ENCODE measurements at regions of chr12 and their contacts with region 1.

Region 1: DNA sequence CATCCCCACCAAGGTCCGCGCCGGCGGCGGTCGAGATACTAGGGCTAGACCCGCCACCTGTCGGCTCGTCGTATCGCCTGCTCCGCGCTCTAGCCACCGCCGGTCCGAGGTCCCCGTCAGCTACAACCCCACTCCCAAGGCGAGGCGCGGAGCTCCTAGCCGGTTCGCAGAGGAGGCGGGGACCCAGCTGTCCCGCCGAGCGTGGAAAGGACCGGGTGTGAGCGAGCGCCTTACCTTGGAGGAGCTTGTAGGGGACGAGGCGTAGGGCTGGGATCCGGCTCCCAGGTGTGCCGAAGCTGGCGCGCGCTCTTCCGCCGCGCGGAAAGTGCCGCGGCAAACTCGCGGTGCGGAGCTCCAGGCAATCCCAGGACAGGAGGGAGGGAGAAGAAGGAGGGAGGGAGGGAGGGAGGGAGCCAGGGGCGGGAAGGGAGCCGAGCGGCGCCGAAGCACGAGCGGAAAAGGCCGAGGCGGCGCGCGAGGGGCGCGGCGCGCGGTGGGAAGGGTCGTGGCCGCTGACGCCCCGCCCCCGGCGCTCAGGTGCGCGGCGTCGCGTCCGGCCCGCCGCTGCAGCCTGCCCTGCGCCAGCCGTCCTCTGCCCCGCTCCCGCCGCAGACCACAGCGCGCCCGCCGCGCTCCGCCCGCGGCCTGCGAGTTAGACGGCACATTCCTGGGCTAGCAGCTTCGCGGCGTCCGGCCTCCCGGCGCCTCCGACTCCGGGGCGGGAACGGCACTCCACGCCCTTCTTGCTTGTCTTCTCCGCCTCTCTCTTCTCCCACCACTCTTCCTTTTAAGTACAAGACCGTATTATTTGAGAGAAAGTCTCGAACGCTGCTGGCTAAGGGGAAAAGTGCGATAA is at the start of gene PAWR:
- DNase-seq: peak; percentile 89 to 92
- H3K4me3 ChIP-seq: peak within 1 kb of the TSS; percentile 98
- H3K4me3 Mint-ChIP-seq: peak within 1 kb of the TSS; percentile 89
- H3K27ac Mint-ChIP-seq: peak within 1 kb of the TSS; percentile 90
- H3K4me1 ChIP-seq: peaks cover 19% of the 10 kb centered on the region
- H3K4me1 Mint-ChIP-seq: peaks cover 23% of the 10 kb centered on the region
- H3K27me3 ChIP-seq: no peaks in the 10 kb centered on the region
- H3K27me3 Mint-ChIP-seq: no peaks in the 10 kb centered on the region
- CTCF ChIP-seq: no peak
- total RNA-seq, gene PAWR: 157 and 163 TPM in 2 replicates

Region 2: GRCh38 chr12:79514730-79515529 is 175.9 kb before region 1 on chr12:
- CTCF ChIA-PET with region 1: no interaction called
- POLR2A ChIA-PET with region 1: no interaction called
- intact Hi-C with region 1: no loop called
- DNase-seq: no peak
- H3K4me3 ChIP-seq: no peak overlapping the region
- H3K4me3 Mint-ChIP-seq: no peak overlapping the region
- H3K27ac Mint-ChIP-seq: peak overlapping the region; percentile 3
- H3K4me1 ChIP-seq: no peaks in the 10 kb centered on the region
- H3K4me1 Mint-ChIP-seq: no peaks in the 10 kb centered on the region
- H3K27me3 ChIP-seq: no peaks in the 10 kb centered on the region
- H3K27me3 Mint-ChIP-seq: no peaks in the 10 kb centered on the region
- CTCF ChIP-seq: no peak

Region 3: GRCh38 chr12:79555028-79555930 is 135.6 kb before region 1 on chr12:
- CTCF ChIA-PET with region 1: interaction called, 5 read pairs
- POLR2A ChIA-PET with region 1: no interaction called
- intact Hi-C with region 1: loop called (anchors 2 kb)
- DNase-seq: peak in 1 of 2 experiments; percentile 49
- H3K4me3 ChIP-seq: no peak overlapping the region
- H3K4me3 Mint-ChIP-seq: peak overlapping the region; percentile 12
- H3K27ac Mint-ChIP-seq: peak overlapping the region; percentile 76
- H3K4me1 ChIP-seq: peaks cover 73% of the 10 kb centered on the region
- H3K4me1 Mint-ChIP-seq: peaks cover 34% of the 10 kb centered on the region
- H3K27me3 ChIP-seq: no peaks in the 10 kb centered on the region
- H3K27me3 Mint-ChIP-seq: no peaks in the 10 kb centered on the region
- CTCF ChIP-seq: peak; percentile 56 to 71

Region 4: DNA sequence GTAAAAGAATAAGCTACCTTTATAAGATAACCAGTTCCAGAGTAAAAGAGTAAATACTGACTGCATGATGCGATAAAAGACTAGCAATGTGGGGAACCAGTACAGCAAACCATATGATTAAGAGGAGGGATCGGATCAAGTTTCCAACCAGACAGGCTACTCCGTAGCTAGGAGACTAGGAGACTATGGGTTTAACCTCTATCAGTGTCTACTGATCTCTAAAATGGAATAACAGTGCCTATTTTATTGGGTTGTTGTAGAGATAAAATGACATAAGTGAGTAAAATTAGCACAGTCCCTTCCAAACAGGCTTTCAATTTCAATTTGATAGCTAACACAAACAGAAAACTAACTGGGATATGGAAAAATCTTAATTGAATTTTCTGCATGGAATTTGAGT is 76.1 kb before region 1 on chr12:
- CTCF ChIA-PET with region 1: no interaction called
- POLR2A ChIA-PET with region 1: no interaction called
- intact Hi-C with region 1: loop called (anchors 5 kb)
- DNase-seq: no peak
- H3K4me3 ChIP-seq: no peak overlapping the region
- H3K4me3 Mint-ChIP-seq: no peak overlapping the region
- H3K27ac Mint-ChIP-seq: no peak overlapping the region
- H3K4me1 ChIP-seq: peaks cover 5% of the 10 kb centered on the region; the same call in 1 of the 2 replicates
- H3K4me1 Mint-ChIP-seq: peaks cover 7% of the 10 kb centered on the region
- H3K27me3 ChIP-seq: no peaks in the 10 kb centered on the region
- H3K27me3 Mint-ChIP-seq: no peaks in the 10 kb centered on the region
- CTCF ChIP-seq: no peak

Region 5: DNA sequence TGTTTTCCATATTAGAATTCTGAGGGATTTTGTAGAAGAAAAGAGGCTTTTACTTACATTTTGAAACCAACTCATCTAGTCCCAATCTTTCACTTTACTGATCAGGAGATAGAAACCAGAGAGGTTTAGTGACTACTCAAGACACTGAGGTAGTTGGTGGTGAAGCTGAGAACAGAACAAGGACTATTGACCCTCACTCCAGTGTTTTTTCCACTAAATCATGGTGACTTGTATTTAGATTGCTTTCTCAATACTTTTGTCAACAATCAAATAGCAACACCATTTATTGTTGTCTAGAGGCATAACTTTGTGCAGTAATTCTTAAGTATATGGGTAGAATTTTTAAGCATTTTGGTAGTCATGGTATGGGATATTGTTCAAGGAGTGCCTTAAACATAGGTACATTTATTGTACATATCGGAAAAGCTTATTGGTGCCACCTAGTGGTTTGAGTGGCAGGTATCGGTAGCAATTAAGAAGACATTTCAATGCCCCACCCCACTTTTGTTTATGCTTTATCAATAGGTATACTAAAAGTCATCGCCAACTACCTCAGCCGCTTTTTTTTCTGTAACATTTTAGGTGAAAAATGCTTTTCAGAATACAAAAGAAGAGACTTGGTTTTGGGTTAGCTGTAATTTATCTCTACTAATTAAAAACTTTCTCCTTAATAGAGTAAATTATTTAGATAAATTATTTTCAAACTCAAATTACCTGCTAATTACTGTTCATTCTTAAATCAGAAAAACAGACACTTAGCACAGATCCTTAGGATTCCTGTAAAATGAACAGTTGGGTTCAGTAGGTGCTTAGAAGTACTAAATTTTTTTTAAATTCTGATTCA is 47.2 kb after region 1 on chr12:
- CTCF ChIA-PET with region 1: no interaction called
- POLR2A ChIA-PET with region 1: no interaction called
- intact Hi-C with region 1: loop called (anchors 1 kb)
- DNase-seq: peak; percentile 62 to 69
- H3K4me3 ChIP-seq: no peak overlapping the region
- H3K4me3 Mint-ChIP-seq: no peak overlapping the region
- H3K27ac Mint-ChIP-seq: no peak overlapping the region
- H3K4me1 ChIP-seq: peaks cover 9% of the 10 kb centered on the region; the same call in 1 of the 2 replicates
- H3K4me1 Mint-ChIP-seq: peaks cover 6% of the 10 kb centered on the region
- H3K27me3 ChIP-seq: no peaks in the 10 kb centered on the region
- H3K27me3 Mint-ChIP-seq: no peaks in the 10 kb centered on the region
- CTCF ChIP-seq: peak; percentile 50 to 58